ENCODE measurements at regions of chr11 and their contacts with region 1.

Region 1: DNA sequence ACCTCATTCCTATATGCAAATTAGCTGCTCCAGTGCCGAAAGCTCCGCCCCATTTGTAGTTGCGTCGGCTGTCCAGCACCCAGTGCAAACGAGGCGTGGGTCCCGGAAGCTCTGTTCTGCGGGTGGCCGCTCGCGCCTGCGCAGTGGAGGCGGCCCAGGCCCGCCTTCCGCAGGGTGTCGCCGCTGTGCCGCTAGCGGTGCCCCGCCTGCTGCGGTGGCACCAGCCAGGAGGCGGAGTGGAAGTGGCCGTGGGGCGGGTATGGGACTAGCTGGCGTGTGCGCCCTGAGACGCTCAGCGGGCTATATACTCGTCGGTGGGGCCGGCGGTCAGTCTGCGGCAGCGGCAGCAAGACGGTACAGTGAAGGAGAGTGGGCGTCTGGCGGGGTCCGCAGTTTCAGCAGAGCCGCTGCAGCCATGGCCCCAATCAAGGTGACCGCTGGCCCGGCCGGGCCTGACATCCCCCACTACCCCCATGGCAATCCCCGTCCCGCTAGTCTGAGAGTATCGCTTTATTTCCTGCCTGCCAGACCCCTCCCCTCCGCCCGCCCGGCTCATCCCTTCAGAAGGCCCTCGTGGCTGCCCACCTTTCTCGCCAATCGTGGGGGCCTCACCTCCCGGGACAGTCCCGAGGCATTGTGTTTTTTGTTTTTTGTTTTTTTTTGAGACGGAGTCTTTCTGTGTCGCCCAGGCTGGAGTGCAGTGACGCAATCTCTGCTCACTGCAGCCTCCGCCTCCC is at the start of gene PRDX5:
- DNase-seq: peak; percentile 88 to 99 (median 94)
- ATAC-seq: peak; percentile 72
- H3K4me3 ChIP-seq: peak within 1 kb of the TSS; percentile 96
- H3K4me3 Mint-ChIP-seq: peak within 1 kb of the TSS; percentile 92
- H3K27ac ChIP-seq: peak within 1 kb of the TSS; percentile 93 to 99
- H3K27ac Mint-ChIP-seq: peak within 1 kb of the TSS; percentile 98
- H3K4me1 ChIP-seq: peaks cover 34% of the 10 kb centered on the region
- H3K4me1 Mint-ChIP-seq: peaks cover 40% of the 10 kb centered on the region
- H3K27me3 ChIP-seq: no peaks in the 10 kb centered on the region
- H3K27me3 Mint-ChIP-seq: no peaks in the 10 kb centered on the region
- CTCF ChIP-seq: peak; percentile 40
- total RNA-seq, gene PRDX5: 31.7 to 33.1 TPM

Region 2: DNA sequence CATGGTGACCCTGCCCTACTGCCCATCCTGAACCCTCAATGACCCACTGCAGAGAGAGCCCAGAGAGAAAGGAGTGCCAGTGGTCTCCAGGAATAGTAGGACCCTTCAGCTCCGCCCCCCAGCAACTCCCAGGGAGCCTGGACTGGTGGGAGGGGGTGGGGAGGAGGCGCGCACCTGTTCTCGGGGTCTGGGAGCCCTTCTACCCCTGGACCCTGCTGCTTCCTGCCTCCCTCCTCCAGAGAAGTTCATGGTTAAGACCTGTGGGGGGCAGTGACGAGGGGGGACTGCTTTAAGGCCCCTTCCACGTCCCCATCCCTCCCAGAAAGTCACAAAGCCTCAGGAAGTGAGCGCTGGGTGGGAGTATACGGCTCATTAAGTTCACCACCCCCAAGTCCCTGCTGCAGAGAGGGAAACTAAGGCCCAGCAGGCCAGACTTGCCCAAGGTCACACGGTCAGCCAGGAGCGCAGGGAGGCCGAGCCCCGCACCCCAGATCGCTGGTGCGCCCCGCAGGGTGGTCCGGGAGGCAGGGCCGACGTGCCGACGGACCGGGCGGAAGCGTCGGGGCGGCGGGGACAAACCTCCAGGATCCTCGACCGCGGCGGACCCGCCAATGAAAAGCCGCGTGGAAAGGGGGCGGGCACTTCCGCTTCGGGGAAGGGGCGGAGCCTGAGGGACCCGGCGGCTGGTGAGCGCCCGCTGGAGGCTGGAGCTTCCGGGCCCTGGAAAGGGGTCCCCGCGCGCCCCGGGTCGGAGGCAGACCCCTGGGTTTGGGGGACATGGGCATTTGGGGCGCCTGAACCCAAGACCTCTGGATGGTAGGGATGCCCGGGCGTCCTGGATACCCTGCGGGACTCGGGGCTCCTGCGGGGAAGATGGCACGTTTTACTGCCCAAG is 92.3 kb before region 1 on chr11 and contains the starts of genes NUDT22 and TRPT1:
- CTCF ChIA-PET with region 1: interaction called, 3 read pairs
- POLR2A ChIA-PET with region 1: interaction called, 12 read pairs
- intact Hi-C with region 1: no loop called
- DNase-seq: peak; percentile 79 to 96 (median 91)
- ATAC-seq: peak; percentile 67
- H3K4me3 ChIP-seq: peak within 1 kb of the TSS; percentile 99
- H3K4me3 Mint-ChIP-seq: peak within 1 kb of the TSS; percentile 97
- H3K27ac ChIP-seq: peak within 1 kb of the TSS; percentile 77 to 87
- H3K27ac Mint-ChIP-seq: peak within 1 kb of the TSS; percentile 87
- H3K4me1 ChIP-seq: peaks cover 57% of the 10 kb centered on the region
- H3K4me1 Mint-ChIP-seq: peaks cover 39% of the 10 kb centered on the region
- H3K27me3 ChIP-seq: no peaks in the 10 kb centered on the region
- H3K27me3 Mint-ChIP-seq: no peaks in the 10 kb centered on the region
- CTCF ChIP-seq: peak; percentile 7
- total RNA-seq, gene NUDT22: 26.8 to 26.9 TPM
- total RNA-seq, gene TRPT1: 11.3 to 11.5 TPM

Region 3: DNA sequence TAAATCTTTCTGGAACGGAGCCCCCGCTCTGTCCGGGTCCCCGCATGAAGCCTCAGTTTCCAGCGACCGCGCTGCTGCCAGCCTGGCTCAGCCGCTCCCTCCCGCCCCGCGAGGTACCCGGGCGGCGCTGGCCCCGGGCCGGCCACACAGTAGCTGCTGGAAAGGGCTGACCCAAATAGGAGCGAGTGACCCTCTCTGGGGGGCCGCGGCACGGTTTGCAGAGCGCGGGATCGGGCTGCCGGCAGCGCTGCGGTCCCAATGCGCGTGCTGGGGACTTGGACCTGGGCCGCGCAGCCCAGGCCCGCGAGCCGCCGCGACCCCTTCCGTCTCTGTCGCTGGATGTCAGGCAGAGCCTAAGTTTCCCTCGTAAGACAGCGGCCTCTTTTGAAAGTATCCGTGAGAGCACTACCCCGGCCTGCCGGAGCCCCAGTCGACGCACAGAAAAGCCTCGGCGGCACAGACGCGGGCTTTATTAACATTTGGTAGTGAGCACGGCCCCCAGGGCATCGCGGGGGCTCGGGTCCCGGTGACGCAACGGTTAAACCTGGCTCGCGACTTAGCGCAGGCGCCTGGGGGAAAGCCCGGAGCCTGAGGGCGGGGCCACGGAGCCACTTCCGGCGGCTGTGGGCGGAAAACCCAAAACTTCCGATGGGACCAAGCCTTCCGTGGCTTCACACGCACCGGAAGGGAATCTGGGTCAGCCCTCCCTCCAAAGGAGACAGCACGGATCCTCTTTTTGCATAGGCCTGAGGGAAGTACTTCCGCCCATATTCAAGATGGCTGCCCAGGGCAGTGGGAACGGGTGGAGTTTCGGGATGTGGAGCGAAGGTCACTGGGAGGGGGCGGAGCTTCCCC is 48.5 kb before region 1 on chr11:
- CTCF ChIA-PET with region 1: interaction called, 15 read pairs
- POLR2A ChIA-PET with region 1: interaction called, 83 read pairs
- intact Hi-C with region 1: loop called (anchors 1 kb)
- DNase-seq: peak; percentile 94 to 99 (median 96)
- ATAC-seq: peak; percentile 68
- H3K4me3 ChIP-seq: peak overlapping the region; percentile 97
- H3K4me3 Mint-ChIP-seq: peak overlapping the region; percentile 94
- H3K27ac ChIP-seq: peak overlapping the region; percentile 92 to 99
- H3K27ac Mint-ChIP-seq: peak overlapping the region; percentile 99
- H3K4me1 ChIP-seq: peaks cover 43% of the 10 kb centered on the region
- H3K4me1 Mint-ChIP-seq: peaks cover 32% of the 10 kb centered on the region
- H3K27me3 ChIP-seq: no peaks in the 10 kb centered on the region
- H3K27me3 Mint-ChIP-seq: peaks cover 5% of the 10 kb centered on the region
- CTCF ChIP-seq: no peak

Region 4: DNA sequence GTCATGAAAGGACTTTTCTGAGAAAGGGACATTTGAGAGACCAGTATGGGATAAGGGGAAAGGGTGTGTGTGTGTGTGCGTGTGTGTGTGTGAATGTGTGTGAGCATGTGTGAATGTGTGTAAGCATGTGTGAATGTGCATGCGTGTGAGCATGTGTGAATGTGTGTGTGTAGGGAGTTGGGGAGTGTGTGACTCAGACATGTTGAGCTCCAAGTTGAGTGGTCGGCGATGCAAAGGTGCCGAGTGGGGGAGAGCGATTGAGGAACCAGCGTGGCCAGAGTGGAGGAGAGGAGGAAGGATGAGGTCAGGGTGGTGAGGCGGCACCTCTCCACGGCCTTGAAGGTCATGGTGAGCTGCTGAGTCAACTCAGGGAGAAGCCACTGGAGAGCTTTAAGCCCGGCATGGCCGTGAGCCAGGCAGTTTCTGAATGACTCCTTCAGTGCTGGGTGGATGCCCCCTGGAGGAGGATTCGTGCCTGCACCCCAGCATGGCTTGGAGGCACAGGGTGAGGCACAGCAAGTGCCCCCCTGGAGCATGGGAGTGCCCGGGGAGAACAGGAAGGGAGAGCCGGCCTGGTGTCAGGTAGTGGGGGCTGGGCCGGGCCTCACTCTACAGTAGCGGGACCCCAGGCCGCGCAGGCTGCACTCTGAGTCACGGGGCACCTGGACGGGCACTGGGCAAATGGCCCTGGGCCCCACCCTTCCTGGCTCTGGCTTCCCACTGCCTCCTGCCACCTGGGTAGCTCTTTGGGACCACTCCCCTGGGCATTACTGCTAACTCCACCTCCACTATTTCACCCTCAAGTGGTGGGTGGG is 13.6 kb after region 1 on chr11:
- CTCF ChIA-PET with region 1: interaction called, 39 read pairs
- POLR2A ChIA-PET with region 1: interaction called, 23 read pairs
- intact Hi-C with region 1: no loop called
- DNase-seq: peak; percentile 41 to 86 (median 58)
- ATAC-seq: peak; percentile 93
- H3K4me3 ChIP-seq: no peak overlapping the region
- H3K4me3 Mint-ChIP-seq: no peak overlapping the region
- H3K27ac ChIP-seq: no peak overlapping the region
- H3K27ac Mint-ChIP-seq: peak overlapping the region; percentile 13
- H3K4me1 ChIP-seq: peaks cover 10% of the 10 kb centered on the region
- H3K4me1 Mint-ChIP-seq: peaks cover 9% of the 10 kb centered on the region
- H3K27me3 ChIP-seq: no peaks in the 10 kb centered on the region
- H3K27me3 Mint-ChIP-seq: no peaks in the 10 kb centered on the region
- CTCF ChIP-seq: peak; percentile 8

Region 5: GRCh38 chr11:64358907-64359711 is 41.0 kb after region 1 on chr11 and contains the start of gene RPS6KA4:
- CTCF ChIA-PET with region 1: interaction called, 12 read pairs
- POLR2A ChIA-PET with region 1: interaction called, 45 read pairs
- intact Hi-C with region 1: loop called (anchors 1 to 5 kb)
- DNase-seq: peak in 8 of 14 experiments; percentile 35 to 79 (median 58)
- ATAC-seq: peak; percentile 69
- H3K4me3 ChIP-seq: peak within 1 kb of the TSS; percentile 88
- H3K4me3 Mint-ChIP-seq: peak within 1 kb of the TSS; percentile 93
- H3K27ac ChIP-seq: peak within 1 kb of the TSS in 1 of 2 donors; percentile 22
- H3K27ac Mint-ChIP-seq: peak within 1 kb of the TSS; percentile 5
- H3K4me1 ChIP-seq: peaks cover 38% of the 10 kb centered on the region
- H3K4me1 Mint-ChIP-seq: peaks cover 25% of the 10 kb centered on the region
- H3K27me3 ChIP-seq: no peaks in the 10 kb centered on the region
- H3K27me3 Mint-ChIP-seq: no peaks in the 10 kb centered on the region
- CTCF ChIP-seq: no peak
- total RNA-seq, gene RPS6KA4: 7.3 to 9.2 TPM

Region 6: DNA sequence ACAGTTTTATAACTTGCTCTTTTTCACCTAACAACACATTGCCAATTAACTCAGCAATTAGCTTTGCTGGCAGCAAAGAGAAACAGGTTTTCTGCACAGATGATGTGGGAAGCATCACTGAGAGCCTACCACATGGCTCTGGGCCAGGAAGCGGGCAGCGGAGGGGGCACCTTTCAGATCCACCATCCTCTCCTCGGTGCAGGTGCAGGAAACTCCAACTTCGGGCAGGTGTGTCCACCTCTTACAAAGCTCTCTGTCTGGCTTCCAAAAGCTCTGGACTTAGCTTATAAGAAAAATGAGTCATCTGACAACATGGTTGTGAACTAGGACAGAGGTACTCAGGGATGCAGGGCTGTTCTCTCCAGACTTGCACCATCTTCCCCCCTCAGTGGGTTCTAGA is 117.9 kb after region 1 on chr11:
- CTCF ChIA-PET with region 1: no interaction called
- POLR2A ChIA-PET with region 1: no interaction called
- intact Hi-C with region 1: no loop called
- DNase-seq: no peak
- ATAC-seq: no peak
- H3K4me3 ChIP-seq: no peak overlapping the region
- H3K4me3 Mint-ChIP-seq: no peak overlapping the region
- H3K27ac ChIP-seq: no peak overlapping the region
- H3K27ac Mint-ChIP-seq: no peak overlapping the region
- H3K4me1 ChIP-seq: no peaks in the 10 kb centered on the region
- H3K4me1 Mint-ChIP-seq: no peaks in the 10 kb centered on the region
- H3K27me3 ChIP-seq: peaks cover 7 to 13% of the 10 kb centered on the region in 2 experiments
- H3K27me3 Mint-ChIP-seq: peaks cover 13% of the 10 kb centered on the region
- CTCF ChIP-seq: no peak

Region 7: GRCh38 chr11:64778508-64779346 is 460.6 kb after region 1 on chr11 and contains the start of gene SF1:
- CTCF ChIA-PET with region 1: no interaction called
- POLR2A ChIA-PET with region 1: interaction called, 23 read pairs
- intact Hi-C with region 1: no loop called
- DNase-seq: peak; percentile 96 to 100 (median 98)
- ATAC-seq: peak; percentile 81
- H3K4me3 ChIP-seq: peak within 1 kb of the TSS; percentile 74
- H3K4me3 Mint-ChIP-seq: peak within 1 kb of the TSS; percentile 95
- H3K27ac ChIP-seq: peak within 1 kb of the TSS; percentile 94 to 98
- H3K27ac Mint-ChIP-seq: peak within 1 kb of the TSS; percentile 99
- H3K4me1 ChIP-seq: peaks cover 52% of the 10 kb centered on the region
- H3K4me1 Mint-ChIP-seq: peaks cover 70% of the 10 kb centered on the region
- H3K27me3 ChIP-seq: no peaks in the 10 kb centered on the region
- H3K27me3 Mint-ChIP-seq: no peaks in the 10 kb centered on the region
- CTCF ChIP-seq: peak; percentile 14
- total RNA-seq, gene SF1: 1,632 to 1,657 TPM

Measured in CD4-positive, alpha-beta T cell (primary cell).